ENCODE measurements at regions of chr3 and their contacts with region 1.

Region 1: GRCh38 chr3:89851974-89852621 is 744.7 kb downstream of the EPHA3 start:
- DNase-seq: peak in 4 of 5 donors; percentile 20 to 30 (median 28)
- ATAC-seq: peak in 3 of 4 donors; percentile 45 to 74 (median 46)
- H3K4me3 ChIP-seq: no peak overlapping the region
- H3K27ac ChIP-seq: no peak overlapping the region
- H3K4me1 ChIP-seq: no peaks in the 10 kb centered on the region
- H3K27me3 ChIP-seq: no peaks in the 10 kb centered on the region
- CTCF ChIP-seq: peak in 10 of 12 donors; percentile 12 to 65 (median 47)
- POLR2A ChIP-seq: no peak

Region 2: GRCh38 chr3:88031642-88032077 is 1820.4 kb before region 1 on chr3:
- intact Hi-C with region 1: no loop called
- DNase-seq: no peak
- ATAC-seq: peak in 2 of 4 donors; percentile 61 to 66
- H3K4me3 ChIP-seq: peak overlapping the region; percentile 14 to 60 (median 44)
- H3K27ac ChIP-seq: peak overlapping the region in 11 of 12 donors; percentile 39 to 80 (median 64)
- H3K4me1 ChIP-seq: peaks cover 0 to 24% (median 3%) of the 10 kb centered on the region in 12 donors
- H3K27me3 ChIP-seq: no peaks in the 10 kb centered on the region
- CTCF ChIP-seq: peak in 1 of 12 donors; percentile 8
- POLR2A ChIP-seq: no peak

Region 3: DNA sequence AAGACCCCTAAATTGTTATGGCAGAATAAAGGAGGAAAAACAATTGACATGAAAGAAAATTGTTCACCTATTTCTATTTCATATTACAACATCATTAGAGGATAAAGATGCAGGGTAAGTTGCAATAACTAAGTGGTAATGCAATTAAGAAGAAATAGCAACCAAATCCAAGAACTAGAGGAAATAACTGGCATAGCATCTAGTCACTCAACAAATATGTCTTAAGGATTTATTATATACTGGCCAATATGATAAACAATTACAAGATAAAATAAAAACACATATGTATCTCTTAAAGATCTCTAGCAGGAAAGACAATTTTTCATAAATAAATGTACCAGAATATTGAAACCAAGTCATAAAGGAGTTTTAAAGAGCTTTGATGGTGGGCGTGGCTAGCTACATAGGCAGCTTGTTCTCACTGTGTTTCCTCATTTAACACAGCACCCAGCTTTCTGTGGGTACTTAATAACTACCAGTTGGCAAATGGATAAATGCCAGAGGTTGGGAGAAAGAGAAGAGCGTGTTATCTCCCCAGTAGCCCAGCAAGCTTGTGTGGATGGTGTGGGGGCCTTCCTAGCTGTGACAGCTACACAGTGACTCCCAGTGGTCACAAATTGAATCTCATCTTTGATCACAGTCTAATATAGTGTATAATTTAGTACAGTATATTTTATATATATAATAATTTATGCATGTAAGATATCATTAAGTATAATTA is 239.3 kb after region 1 on chr3:
- intact Hi-C with region 1: loop called in 1 of 10 experiments (anchors 10 kb)
- DNase-seq: peak in 3 of 5 donors; percentile 19 to 26 (median 21)
- ATAC-seq: peak; percentile 58 to 76 (median 72)
- H3K4me3 ChIP-seq: peak overlapping the region in 1 of 12 donors; percentile 22
- H3K27ac ChIP-seq: no peak overlapping the region
- H3K4me1 ChIP-seq: peaks cover 0 to 5% (median 0%) of the 10 kb centered on the region in 12 donors
- H3K27me3 ChIP-seq: no peaks in the 10 kb centered on the region
- CTCF ChIP-seq: peak; percentile 27 to 69 (median 46)
- POLR2A ChIP-seq: no peak

Measured in heart left ventricle (tissue), 16 donors.